ENCODE measurements at regions of chr17 and their contacts with region 1.

Region 1: GRCh38 chr17:68377862-68378770 is 79.2 kb downstream of the WIPI1 start:
- DNase-seq: peak; percentile 100
- ATAC-seq: peak; percentile 82 to 88
- H3K4me3 ChIP-seq: peak overlapping the region; percentile 17 to 37 (median 22)
- H3K27ac ChIP-seq: peak overlapping the region; percentile 93 to 98 (median 96)
- H3K4me1 ChIP-seq: peaks cover 41 to 42% of the 10 kb centered on the region in 2 donors
- H3K27me3 ChIP-seq: no peaks in the 10 kb centered on the region
- CTCF ChIP-seq: no peak
- POLR2A ChIP-seq: peak; percentile 56 to 76

Region 2: DNA sequence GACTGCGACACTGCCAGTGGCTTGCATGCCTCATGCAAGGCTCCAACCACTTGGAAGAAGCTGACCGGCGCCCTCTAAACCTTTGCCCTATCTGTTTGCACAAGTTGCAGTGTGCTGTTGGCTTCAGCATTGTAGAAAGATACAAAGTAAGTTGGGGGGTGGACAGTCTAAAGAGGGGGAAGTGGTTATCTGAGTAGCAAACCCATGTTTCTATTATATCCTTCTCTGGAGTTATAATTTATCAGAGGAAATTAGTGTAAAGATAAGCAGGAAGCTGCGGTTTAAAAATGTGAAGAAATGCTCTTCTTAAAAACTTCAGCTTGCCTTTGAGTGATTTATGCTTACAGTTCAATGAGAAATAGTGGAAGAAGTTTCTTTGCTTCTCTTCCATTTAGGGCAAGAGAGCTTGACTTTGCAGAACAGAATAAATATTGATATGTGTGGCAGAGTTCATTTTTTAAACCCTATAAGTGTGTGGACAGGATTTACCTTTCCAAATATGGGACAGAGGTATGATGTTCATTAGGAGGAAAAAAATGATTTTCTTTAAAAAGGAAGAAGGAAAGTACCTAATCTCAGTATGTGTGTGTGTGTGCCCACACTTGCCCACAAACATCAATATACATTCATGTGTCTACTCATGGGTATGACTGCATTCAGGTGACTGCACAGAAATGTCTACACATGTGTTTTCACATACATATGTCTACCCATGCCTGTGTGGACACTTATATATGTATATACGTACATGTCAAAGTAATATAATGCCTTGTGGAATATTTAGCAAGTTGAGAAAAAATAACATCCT is 122.2 kb before region 1 on chr17:
- in situ Hi-C with region 1: loop called in 1 of 4 experiments (anchors 10 kb)
- intact Hi-C with region 1: no loop called
- DNase-seq: no peak
- ATAC-seq: no peak
- H3K4me3 ChIP-seq: no peak overlapping the region
- H3K27ac ChIP-seq: no peak overlapping the region
- H3K4me1 ChIP-seq: peaks cover 0 to 7% of the 10 kb centered on the region in 2 donors
- H3K27me3 ChIP-seq: no peaks in the 10 kb centered on the region
- CTCF ChIP-seq: no peak
- POLR2A ChIP-seq: no peak

Region 3: DNA sequence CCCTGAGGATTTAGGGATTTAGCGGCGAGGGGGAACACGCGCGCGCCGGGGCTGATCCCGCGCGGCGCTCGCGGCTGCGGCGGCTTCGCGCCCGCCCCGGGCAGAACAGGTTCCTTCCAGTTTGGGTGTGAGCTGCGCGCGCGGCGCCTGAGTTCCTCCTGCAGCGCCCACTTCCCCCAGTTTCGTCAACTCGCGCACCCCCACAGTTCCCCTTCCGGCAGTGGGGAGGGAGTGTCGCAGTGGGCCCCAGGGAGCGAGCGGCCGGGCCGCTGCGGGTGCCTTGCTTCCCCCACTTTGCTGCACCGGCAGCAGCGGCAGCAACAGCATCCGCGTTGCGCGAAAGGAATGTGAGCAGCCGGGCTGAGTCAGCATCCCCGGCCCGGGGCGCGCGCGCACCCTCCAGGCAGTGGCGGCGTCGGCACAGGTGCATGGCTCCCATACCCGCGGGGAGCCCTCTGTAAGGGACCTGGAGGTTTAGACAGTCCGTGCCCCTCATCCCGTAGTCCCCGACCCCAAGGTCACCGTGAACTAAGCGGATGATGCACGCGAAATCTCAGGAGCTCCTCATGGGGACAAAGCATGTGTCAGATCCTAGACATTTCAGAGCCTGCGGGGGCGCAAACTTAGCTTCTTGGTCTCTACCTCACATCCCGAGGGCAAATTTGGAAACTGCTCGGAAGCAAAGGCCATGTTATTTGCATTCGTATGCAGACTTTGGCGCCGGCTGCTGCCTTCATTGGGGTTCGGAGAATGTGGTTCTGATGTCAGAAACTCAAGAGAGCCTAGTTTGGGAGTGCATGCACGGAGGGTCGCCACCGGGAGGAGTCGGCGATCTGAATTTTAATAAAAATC is 86.0 kb before region 1 on chr17:
- in situ Hi-C with region 1: no loop called
- intact Hi-C with region 1: loop called (anchors 1 kb)
- DNase-seq: peak; percentile 47 to 71
- ATAC-seq: peak; percentile 59 to 65
- H3K4me3 ChIP-seq: peak overlapping the region; percentile 64 to 81 (median 71)
- H3K27ac ChIP-seq: peak overlapping the region; percentile 78 to 89 (median 88)
- H3K4me1 ChIP-seq: peaks cover 13 to 24% of the 10 kb centered on the region in 2 donors
- H3K27me3 ChIP-seq: no peaks in the 10 kb centered on the region
- CTCF ChIP-seq: peak in 1 of 5 experiments; percentile 27
- POLR2A ChIP-seq: peak; percentile 49 to 65

Region 4: GRCh38 chr17:68318103-68318991 is 59.8 kb before region 1 on chr17:
- in situ Hi-C with region 1: loop called in 1 of 4 experiments (anchors 5 kb)
- intact Hi-C with region 1: loop called (anchors 1 kb)
- DNase-seq: peak; percentile 90 to 93
- ATAC-seq: peak; percentile 83
- H3K4me3 ChIP-seq: no peak overlapping the region
- H3K27ac ChIP-seq: peak overlapping the region; percentile 94 to 99 (median 95)
- H3K4me1 ChIP-seq: peaks cover 46 to 51% of the 10 kb centered on the region in 2 donors
- H3K27me3 ChIP-seq: no peaks in the 10 kb centered on the region
- CTCF ChIP-seq: peak in 1 of 5 experiments; percentile 8
- POLR2A ChIP-seq: peak; percentile 31 to 50

Region 5: DNA sequence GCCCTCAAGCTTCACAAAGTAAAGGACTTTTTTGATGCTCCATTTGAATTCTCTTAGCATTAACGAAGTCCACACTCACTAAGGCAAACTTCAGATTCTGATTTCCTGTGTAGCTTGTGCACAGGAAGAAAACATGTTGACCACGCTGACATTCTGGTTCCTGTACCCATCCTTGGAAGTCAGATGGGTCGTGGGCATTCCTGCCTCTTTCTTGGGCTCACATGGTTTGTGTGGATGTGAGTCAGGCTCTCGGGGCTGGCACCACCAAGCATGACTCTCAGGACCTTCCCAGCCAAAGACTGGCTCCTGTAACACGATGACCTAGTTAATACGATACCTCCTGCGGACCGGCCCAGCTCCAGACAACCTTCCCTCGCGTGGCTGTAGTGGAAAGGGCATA is 54.0 kb before region 1 on chr17:
- in situ Hi-C with region 1: loop called in 1 of 4 experiments (anchors 5 kb)
- intact Hi-C with region 1: loop called (anchors 1 kb)
- DNase-seq: peak; percentile 91 to 97
- ATAC-seq: peak; percentile 74 to 79
- H3K4me3 ChIP-seq: no peak overlapping the region
- H3K27ac ChIP-seq: peak overlapping the region; percentile 94 to 99 (median 95)
- H3K4me1 ChIP-seq: peaks cover 40 to 42% of the 10 kb centered on the region in 2 donors
- H3K27me3 ChIP-seq: no peaks in the 10 kb centered on the region
- CTCF ChIP-seq: no peak
- POLR2A ChIP-seq: peak; percentile 30 to 53

Region 6: DNA sequence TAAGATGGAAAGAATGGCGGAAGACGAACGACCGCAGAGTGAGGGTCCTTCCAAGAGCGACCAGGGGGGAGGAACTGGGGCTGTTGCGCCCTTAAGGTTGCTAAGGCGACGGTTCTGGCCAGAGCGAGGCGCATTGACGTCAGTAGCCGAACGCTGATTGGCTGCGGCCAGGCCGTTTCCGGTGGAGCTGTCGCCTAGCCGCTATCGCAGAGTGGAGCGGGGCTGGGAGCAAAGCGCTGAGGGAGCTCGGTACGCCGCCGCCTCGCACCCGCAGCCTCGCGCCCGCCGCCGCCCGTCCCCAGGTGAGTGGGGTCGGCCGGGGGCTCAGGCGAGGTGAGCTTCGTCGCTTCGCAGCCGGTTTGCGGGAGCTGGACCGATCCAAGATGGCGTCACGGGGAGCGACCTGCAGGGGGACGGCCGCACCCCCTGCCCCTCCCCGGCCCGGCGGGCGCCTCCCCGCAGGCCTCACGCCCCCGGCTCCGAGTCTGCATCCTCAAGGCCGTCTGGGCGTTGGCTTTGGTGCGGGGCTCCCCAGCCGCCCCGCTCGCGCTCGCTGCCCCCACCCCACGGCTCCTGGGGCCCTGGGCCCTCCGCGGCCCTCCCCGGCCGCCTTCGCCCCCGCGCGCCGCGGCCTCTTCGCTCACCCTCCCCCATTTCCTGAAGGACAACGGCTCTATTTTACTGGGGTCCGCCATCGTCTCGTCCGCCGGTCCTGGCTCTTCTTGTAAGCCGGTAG is 134.3 kb after region 1 on chr17 and contains the start of gene PRKAR1A:
- in situ Hi-C with region 1: no loop called
- intact Hi-C with region 1: loop called (anchors 2 kb)
- DNase-seq: peak; percentile 92 to 94
- ATAC-seq: peak; percentile 73 to 81
- H3K4me3 ChIP-seq: peak within 1 kb of the TSS; percentile 78 to 89 (median 84)
- H3K27ac ChIP-seq: peak within 1 kb of the TSS; percentile 94 to 99 (median 96)
- H3K4me1 ChIP-seq: peaks cover 48 to 55% of the 10 kb centered on the region in 2 donors
- H3K27me3 ChIP-seq: no peaks in the 10 kb centered on the region
- CTCF ChIP-seq: peak in 2 of 5 experiments; percentile 17 to 18
- POLR2A ChIP-seq: peak; percentile 96 to 97
- total RNA-seq, gene PRKAR1A: 271 to 656 (median 557) TPM

Measured in gastrocnemius medialis (tissue), 4 donors.